Activated CD4-positive, alpha-beta T cell treated with anti-CD3 and anti-CD28 coated beads for 36 hours (primary cell): ENCODE measurements at regions of chr16 and their contacts with region 1.

Region 1: DNA sequence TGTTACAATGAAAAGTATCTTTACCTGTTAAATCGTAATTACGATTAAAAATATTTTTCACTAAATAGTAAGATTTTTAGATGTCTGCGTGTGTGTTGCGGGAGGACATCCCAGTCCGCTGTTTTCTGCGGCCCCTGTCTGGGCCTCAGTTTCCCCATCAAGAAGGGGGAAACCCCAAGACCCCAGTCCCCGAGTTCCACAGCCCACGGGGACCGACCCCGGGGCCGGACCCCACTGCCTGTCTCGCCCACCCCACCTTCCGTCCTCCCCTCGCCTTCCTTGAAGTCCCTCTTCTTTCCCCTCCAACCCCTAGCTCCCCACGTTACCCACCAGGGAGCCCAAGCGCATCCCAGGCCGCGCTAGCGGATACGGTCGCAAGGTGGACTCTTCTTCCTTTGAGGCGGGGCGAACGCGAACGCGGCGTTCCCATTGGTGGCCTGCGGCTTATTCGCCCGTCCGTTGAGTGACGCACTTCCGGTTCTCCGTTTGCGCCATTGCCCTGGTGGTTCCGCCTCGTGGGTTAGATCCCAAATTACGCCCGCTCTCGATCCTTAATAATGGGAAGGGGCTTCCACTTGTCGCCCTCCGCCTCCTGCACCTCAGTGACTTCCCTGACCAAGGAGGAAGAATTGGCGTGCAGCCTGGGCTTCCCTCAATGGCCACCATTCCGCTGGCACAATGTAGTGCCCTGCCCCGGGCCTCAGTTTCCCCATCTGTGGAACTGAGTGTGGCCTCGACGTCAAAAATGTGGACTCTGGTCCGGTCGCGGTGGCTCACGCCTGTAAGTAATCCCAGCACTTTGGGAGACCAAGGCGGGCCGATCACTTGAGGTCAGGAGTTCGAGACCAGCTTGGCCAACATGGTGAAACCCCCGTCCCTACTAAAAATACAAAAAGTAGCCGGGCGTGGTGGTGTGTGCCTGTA is at the start of gene NSMCE1:
- DNase-seq: peak; percentile 99
- ATAC-seq: peak; percentile 94
- H3K4me3 Mint-ChIP-seq: peak within 1 kb of the TSS; percentile 90
- H3K27ac Mint-ChIP-seq: peak within 1 kb of the TSS; percentile 95
- H3K4me1 Mint-ChIP-seq: peaks cover 72% of the 10 kb centered on the region
- H3K27me3 Mint-ChIP-seq: no peaks in the 10 kb centered on the region
- total RNA-seq, gene NSMCE1: 110 to 127 TPM

Region 2: DNA sequence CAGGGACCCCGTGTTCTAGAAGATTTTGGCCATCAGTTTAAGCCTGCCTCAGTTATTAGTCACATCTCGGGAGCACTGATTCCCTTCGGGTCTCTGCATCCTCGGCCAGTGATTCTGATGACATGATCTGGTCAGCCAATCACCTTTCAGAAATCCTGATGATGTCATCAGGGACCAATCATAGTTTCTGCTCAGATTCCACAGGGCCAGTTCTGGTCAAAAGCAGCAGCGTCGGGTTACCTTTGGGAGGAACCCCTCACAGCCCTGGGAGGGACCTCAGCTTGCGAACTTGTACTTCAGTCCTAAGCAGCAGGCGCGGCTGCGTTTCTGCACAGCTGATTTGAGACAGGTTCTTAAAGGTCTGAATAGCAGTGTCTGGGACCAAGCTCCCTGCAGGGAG is 51.4 kb before region 1 on chr16:
- CTCF ChIA-PET with region 1: no interaction called
- POLR2A ChIA-PET with region 1: no interaction called
- intact Hi-C with region 1: loop called in 1 of 2 experiments (anchors 5 kb)
- DNase-seq: no peak
- ATAC-seq: no peak
- H3K4me3 Mint-ChIP-seq: no peak overlapping the region
- H3K27ac Mint-ChIP-seq: no peak overlapping the region
- H3K4me1 Mint-ChIP-seq: no peaks in the 10 kb centered on the region
- H3K27me3 Mint-ChIP-seq: no peaks in the 10 kb centered on the region

Region 3: DNA sequence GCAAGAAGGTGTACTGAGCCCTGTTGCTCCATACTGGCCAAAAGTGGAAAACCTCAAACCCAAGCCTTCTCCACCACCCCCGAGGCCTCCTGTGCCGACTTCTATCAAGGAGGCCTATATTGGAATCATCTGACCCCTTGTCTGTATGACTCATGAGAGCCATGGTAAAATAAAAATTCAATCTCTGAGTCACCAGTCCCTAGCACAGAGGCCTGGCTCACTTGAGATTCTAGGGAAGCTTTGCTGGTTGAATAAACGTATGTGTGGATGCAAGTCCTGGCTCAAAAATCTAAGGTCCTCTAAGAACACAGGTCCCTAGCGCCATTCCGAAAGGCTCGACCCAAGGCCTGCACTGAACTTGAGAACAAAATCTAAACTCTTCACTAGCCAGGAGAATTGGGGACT is 15.1 kb before region 1 on chr16:
- CTCF ChIA-PET with region 1: interaction called, 5 read pairs
- POLR2A ChIA-PET with region 1: interaction called, 11 read pairs
- intact Hi-C with region 1: loop called in 1 of 2 experiments (anchors 2 kb)
- DNase-seq: no peak
- ATAC-seq: peak; percentile 63
- H3K4me3 Mint-ChIP-seq: peak overlapping the region; percentile 41
- H3K27ac Mint-ChIP-seq: peak overlapping the region; percentile 88
- H3K4me1 Mint-ChIP-seq: peaks cover 82% of the 10 kb centered on the region
- H3K27me3 Mint-ChIP-seq: no peaks in the 10 kb centered on the region

Region 4: GRCh38 chr16:27389272-27389961 is 120.8 kb after region 1 on chr16:
- CTCF ChIA-PET with region 1: no interaction called
- POLR2A ChIA-PET with region 1: no interaction called
- intact Hi-C with region 1: no loop called
- DNase-seq: no peak
- ATAC-seq: no peak
- H3K4me3 Mint-ChIP-seq: no peak overlapping the region
- H3K27ac Mint-ChIP-seq: no peak overlapping the region
- H3K4me1 Mint-ChIP-seq: peaks cover 18% of the 10 kb centered on the region
- H3K27me3 Mint-ChIP-seq: no peaks in the 10 kb centered on the region